ENCODE measurements at regions of chr2 and their contacts with region 1.

Region 1: GRCh38 chr2:157327621-157328500 is 2.2 kb upstream of the ERMN start:
- DNase-seq: peak; percentile 87
- H3K4me3 Mint-ChIP-seq: no peak overlapping the region
- H3K27ac Mint-ChIP-seq: no peak overlapping the region
- H3K4me1 Mint-ChIP-seq: peaks cover 42% of the 10 kb centered on the region
- H3K27me3 Mint-ChIP-seq: no peaks in the 10 kb centered on the region

Region 2: GRCh38 chr2:157311706-157312105 is 16.2 kb before region 1 on chr2:
- CTCF ChIA-PET with region 1: interaction called, 34 read pairs
- POLR2A ChIA-PET with region 1: no interaction called
- DNase-seq: no peak
- H3K4me3 Mint-ChIP-seq: no peak overlapping the region
- H3K27ac Mint-ChIP-seq: no peak overlapping the region
- H3K4me1 Mint-ChIP-seq: peaks cover 25% of the 10 kb centered on the region
- H3K27me3 Mint-ChIP-seq: no peaks in the 10 kb centered on the region

Region 3: GRCh38 chr2:157404363-157404762 is 76.5 kb after region 1 on chr2:
- CTCF ChIA-PET with region 1: interaction called, 50 read pairs
- POLR2A ChIA-PET with region 1: interaction called, 15 read pairs
- DNase-seq: peak; percentile 67
- H3K4me3 Mint-ChIP-seq: peak overlapping the region; percentile 50
- H3K27ac Mint-ChIP-seq: peak overlapping the region; percentile 87
- H3K4me1 Mint-ChIP-seq: peaks cover 64% of the 10 kb centered on the region
- H3K27me3 Mint-ChIP-seq: no peaks in the 10 kb centered on the region

Region 4: DNA sequence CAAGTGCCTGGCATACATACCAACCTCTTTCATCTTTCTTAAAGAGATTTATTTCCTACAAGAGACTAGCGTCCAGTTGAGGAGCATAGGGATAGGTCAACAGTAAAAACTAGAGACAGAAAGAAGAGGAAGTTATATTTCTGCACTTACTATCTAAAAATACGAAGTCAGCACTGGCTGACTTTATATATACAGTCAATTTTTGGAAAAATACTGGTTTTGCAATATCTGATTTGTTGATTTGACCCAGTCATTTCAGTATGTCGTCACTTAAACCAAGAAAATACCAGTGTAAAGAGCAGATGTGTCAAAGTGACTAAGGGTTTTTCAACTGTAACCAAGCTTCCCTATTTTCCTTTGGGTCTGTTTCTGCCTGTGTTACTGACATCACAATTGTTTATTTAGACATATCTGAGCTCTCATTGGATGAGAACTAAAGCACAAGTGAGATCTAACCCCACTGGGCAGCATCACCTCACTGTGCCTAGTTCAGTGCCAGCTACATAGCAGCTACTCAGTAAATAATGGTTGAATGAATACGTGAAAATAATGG is 93.0 kb after region 1 on chr2:
- CTCF ChIA-PET with region 1: interaction called, 50 read pairs
- POLR2A ChIA-PET with region 1: interaction called, 37 read pairs
- DNase-seq: no peak
- H3K4me3 Mint-ChIP-seq: no peak overlapping the region
- H3K27ac Mint-ChIP-seq: peak overlapping the region; percentile 88
- H3K4me1 Mint-ChIP-seq: peaks cover 77% of the 10 kb centered on the region
- H3K27me3 Mint-ChIP-seq: no peaks in the 10 kb centered on the region

Region 5: DNA sequence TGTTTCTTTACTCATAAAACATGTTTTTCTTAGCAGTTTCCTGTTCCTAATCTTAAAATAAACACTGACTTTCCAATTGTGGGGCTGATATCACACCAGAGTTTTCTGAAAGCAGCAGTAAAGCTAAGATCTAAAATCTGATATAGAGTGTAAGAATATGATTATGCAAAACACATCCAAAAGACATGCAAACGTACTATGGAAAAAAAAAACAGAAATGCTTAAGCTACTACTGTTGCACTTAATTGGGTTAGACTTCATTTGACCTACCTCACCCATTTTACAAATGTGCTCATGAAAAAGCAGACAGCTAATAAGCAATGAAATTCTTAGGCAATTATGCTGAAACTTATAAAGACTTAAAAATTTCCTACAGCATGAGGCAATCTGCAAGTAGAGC is 105.5 kb after region 1 on chr2:
- CTCF ChIA-PET with region 1: interaction called, 36 read pairs
- POLR2A ChIA-PET with region 1: interaction called, 34 read pairs
- DNase-seq: no peak
- H3K4me3 Mint-ChIP-seq: peak overlapping the region; percentile 91
- H3K27ac Mint-ChIP-seq: peak overlapping the region; percentile 80
- H3K4me1 Mint-ChIP-seq: peaks cover 78% of the 10 kb centered on the region
- H3K27me3 Mint-ChIP-seq: no peaks in the 10 kb centered on the region

Region 6: DNA sequence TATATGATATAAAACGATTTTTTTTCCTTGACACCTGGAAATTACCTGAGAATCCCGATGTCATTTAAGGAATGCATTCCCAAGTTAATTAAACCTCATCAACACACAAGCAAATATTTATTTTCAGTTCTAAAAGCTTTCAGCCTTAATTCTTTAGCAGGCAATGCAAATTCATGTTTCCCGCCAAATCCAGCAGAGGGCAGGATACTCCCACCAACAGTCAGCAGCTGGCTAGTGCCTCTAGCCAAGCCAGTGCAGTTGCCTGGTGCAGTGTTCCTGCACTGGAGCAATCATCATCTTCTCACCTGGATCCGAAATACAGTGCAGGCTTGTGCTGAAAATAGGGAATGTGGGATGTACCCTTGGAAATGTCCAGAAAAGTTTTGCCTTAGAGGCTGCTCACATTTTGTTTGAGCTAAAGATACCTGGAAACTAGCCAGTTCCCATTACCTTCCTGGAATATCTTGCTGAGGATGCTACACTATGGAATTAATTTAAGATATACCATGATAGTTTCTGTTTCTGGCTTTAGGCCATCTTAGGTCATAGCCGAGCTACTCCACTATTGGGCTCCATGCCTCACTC is 164.4 kb after region 1 on chr2:
- CTCF ChIA-PET with region 1: interaction called, 24 read pairs
- POLR2A ChIA-PET with region 1: interaction called, 4 read pairs
- DNase-seq: peak; percentile 79
- H3K4me3 Mint-ChIP-seq: no peak overlapping the region
- H3K27ac Mint-ChIP-seq: no peak overlapping the region
- H3K4me1 Mint-ChIP-seq: peaks cover 66% of the 10 kb centered on the region
- H3K27me3 Mint-ChIP-seq: no peaks in the 10 kb centered on the region